Esophagus muscularis mucosa (tissue), 4 donors: ENCODE measurements at regions of chr15 and their contacts with region 1.

Region 1: DNA sequence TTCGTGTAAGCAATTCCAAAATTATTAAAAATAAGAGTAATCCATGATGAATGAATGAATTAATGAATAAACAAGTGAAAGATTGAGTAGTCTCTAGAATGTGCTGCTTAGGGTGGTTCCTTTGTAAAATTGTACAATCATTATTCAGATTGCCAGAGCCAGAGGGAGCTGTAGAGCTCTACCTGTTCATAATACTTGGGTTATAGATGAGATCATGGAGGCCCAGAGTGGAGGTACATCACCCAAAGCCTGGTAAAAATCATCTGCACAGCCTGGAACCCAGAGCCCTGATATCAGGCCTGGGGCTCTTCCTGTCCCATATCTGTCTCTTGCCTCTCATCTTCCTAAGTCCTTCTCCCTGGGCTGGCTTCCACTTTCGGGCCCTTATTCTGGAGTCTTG is 297.2 kb downstream of the RPLP1 start:
- DNase-seq: no peak
- H3K4me3 ChIP-seq: no peak overlapping the region
- H3K27ac ChIP-seq: no peak overlapping the region
- H3K4me1 ChIP-seq: peaks cover 0 to 3% (median 0%) of the 10 kb centered on the region in 4 donors
- H3K27me3 ChIP-seq: peaks cover 0 to 7% (median 0%) of the 10 kb centered on the region in 4 donors
- CTCF ChIP-seq: peak in 1 of 3 experiments; percentile 11
- EP300 ChIP-seq: no peak
- POLR2A ChIP-seq: no peak

Region 2: DNA sequence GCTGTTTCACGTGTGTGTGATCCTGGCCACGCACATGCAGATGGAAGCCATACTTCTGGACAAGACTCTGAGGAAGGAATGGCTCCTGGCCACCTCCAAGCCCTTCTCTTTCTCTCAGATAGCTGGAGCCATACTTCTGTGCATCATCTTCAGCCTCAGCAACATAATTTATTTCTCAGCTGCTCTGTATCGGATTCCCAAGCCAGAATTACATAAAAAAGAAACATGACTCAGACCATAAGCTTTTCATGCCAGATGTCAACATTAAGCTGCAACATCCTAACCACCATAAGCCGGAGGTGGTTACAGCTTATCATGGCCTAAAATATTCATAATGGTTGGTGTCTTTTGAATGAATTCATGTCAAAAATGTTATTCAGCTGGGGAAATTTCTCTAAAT is 346.2 kb before region 1 on chr15:
- intact Hi-C with region 1: no loop called
- DNase-seq: no peak
- H3K4me3 ChIP-seq: no peak overlapping the region
- H3K27ac ChIP-seq: no peak overlapping the region
- H3K4me1 ChIP-seq: no peaks in the 10 kb centered on the region
- H3K27me3 ChIP-seq: no peaks in the 10 kb centered on the region
- CTCF ChIP-seq: no peak
- EP300 ChIP-seq: no peak
- POLR2A ChIP-seq: no peak

Region 3: DNA sequence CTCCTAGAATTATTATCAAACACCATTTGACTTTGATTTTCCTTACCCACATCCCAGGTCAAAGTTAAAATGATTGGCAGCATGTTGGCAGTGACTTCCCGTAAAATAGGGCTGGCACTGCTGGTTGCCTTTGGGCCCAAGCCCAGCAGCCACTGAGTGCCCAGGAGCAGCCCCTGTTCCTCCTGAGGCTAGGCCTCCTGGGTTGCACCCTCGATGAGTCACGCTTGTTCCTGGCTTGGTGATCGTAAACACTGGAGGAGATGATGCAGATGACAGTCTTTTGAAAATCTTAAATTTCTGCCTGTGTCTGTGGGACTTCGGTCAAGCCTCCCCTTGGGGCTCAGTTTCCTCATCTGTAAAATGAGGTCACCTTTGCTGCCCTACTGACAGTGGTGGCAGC is 58.0 kb after region 1 on chr15:
- intact Hi-C with region 1: loop called (anchors 10 kb)
- DNase-seq: no peak
- H3K4me3 ChIP-seq: no peak overlapping the region
- H3K27ac ChIP-seq: no peak overlapping the region
- H3K4me1 ChIP-seq: peaks cover 0 to 24% (median 22%) of the 10 kb centered on the region in 4 donors
- H3K27me3 ChIP-seq: no peaks in the 10 kb centered on the region
- CTCF ChIP-seq: no peak
- EP300 ChIP-seq: no peak
- POLR2A ChIP-seq: no peak